Activated CD8-positive, alpha-beta memory T cell treated with anti-CD3 and anti-CD28 coated beads, Interleukin-2, amount 10 ng/mL, durations not matched to agents 7 days and 5 days (primary cell): ENCODE measurements at regions of chr17 and their contacts with region 1.

Region 1: GRCh38 chr17:7394452-7395191 is at the start of gene PLSCR3:
- DNase-seq: peak; percentile 86
- ATAC-seq: peak; percentile 92
- H3K4me3 Mint-ChIP-seq: peak within 1 kb of the TSS; percentile 94
- H3K27ac Mint-ChIP-seq: peak within 1 kb of the TSS; percentile 85
- H3K4me1 Mint-ChIP-seq: peaks cover 18% of the 10 kb centered on the region
- H3K27me3 Mint-ChIP-seq: no peaks in the 10 kb centered on the region
- total RNA-seq, gene PLSCR3: 65.5 to 74.2 TPM

Region 2: GRCh38 chr17:7177196-7177953 is 217.2 kb before region 1 on chr17:
- CTCF ChIA-PET with region 1: no interaction called
- DNase-seq: peak; percentile 75
- ATAC-seq: peak; percentile 73
- H3K4me3 Mint-ChIP-seq: peak overlapping the region; percentile 53
- H3K27ac Mint-ChIP-seq: no peak overlapping the region
- H3K4me1 Mint-ChIP-seq: peaks cover 9% of the 10 kb centered on the region
- H3K27me3 Mint-ChIP-seq: peaks cover 14% of the 10 kb centered on the region

Region 3: GRCh38 chr17:7383742-7384488 is 10.7 kb before region 1 on chr17:
- CTCF ChIA-PET with region 1: interaction called, 10 read pairs
- DNase-seq: peak; percentile 81
- ATAC-seq: peak; percentile 99
- H3K4me3 Mint-ChIP-seq: peak overlapping the region; percentile 72
- H3K27ac Mint-ChIP-seq: peak overlapping the region; percentile 68
- H3K4me1 Mint-ChIP-seq: peaks cover 7% of the 10 kb centered on the region
- H3K27me3 Mint-ChIP-seq: peaks cover 33% of the 10 kb centered on the region